ENCODE measurements at regions of chr1 and their contacts with region 1.

Region 1: GRCh38 chr1:199113265-199113869 is 474.5 kb downstream of the PTPRC start:
- DNase-seq: peak; percentile 85
- H3K4me3 ChIP-seq: no peak overlapping the region
- H3K27ac ChIP-seq: peak overlapping the region; percentile 34
- H3K4me1 ChIP-seq: no peaks in the 10 kb centered on the region
- H3K27me3 ChIP-seq: no peaks in the 10 kb centered on the region
- CTCF ChIP-seq: peak; percentile 91

Region 2: DNA sequence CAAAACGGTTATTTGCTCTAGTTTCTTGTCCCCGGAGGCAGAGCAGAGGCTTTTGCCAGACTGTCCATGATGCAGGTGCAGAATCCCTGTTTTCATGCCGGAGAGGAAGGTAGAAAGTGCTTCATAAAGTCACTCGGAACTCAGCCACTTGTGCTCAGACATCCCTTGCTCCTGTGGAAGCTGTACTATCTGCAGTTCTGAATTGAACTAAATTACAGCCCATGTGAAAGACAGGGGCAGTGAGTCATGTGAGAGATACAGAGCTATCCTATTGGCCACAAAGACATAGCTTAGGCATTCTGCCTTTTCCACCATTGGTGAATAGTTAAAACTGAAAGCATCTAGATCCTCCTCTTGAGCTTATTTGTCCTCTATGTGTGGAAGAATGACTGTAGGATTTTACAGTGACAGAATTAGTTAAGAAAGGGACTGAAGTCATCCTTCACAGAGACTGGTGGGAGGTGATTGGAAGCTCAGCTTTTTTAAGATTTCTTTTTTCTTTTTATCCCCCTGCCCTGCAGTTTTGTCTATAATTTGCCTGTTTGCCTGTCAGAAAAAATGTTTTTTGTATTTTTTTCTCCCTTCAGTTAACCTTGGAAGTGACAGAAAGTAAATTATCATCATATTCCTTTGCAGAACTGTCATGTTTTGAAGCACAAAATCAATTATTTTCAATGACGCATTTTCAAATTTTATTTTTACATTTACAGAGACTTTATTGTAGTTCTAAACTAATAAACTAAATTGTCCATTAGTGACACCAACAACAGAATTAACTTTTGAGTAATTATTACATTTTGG is 175.9 kb before region 1 on chr1:
- CTCF ChIA-PET with region 1: interaction called, 3 read pairs
- POLR2A ChIA-PET with region 1: no interaction called
- intact Hi-C with region 1: loop called (anchors 5 kb)
- DNase-seq: peak; percentile 98
- H3K4me3 ChIP-seq: peak overlapping the region; percentile 68
- H3K27ac ChIP-seq: peak overlapping the region; percentile 94
- H3K4me1 ChIP-seq: peaks cover 10% of the 10 kb centered on the region
- H3K27me3 ChIP-seq: no peaks in the 10 kb centered on the region
- CTCF ChIP-seq: no peak

Region 3: DNA sequence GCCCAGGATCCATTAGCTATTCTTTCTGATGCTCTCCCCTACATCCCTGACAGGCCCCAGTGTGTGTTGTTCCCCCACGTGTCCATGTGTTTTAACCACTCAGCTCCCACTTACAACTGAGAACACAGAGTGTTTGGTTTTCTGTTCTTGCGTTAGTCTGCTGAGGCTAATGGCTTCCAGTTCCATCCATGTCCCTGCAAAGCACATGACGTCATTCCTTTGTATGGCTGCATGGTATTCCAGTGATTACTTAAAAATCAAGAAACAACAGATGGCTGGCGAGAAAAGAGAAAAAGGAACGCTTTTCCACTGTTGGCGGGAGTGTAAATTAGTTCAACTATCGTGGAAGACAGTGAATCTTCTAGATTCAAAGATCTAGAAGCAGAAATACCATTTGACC is 81.5 kb after region 1 on chr1:
- CTCF ChIA-PET with region 1: no interaction called
- POLR2A ChIA-PET with region 1: no interaction called
- intact Hi-C with region 1: no loop called
- DNase-seq: no peak
- H3K4me3 ChIP-seq: no peak overlapping the region
- H3K27ac ChIP-seq: no peak overlapping the region
- H3K4me1 ChIP-seq: no peaks in the 10 kb centered on the region
- H3K27me3 ChIP-seq: no peaks in the 10 kb centered on the region
- CTCF ChIP-seq: no peak

Region 4: GRCh38 chr1:199218065-199218464 is 104.7 kb after region 1 on chr1:
- CTCF ChIA-PET with region 1: no interaction called
- POLR2A ChIA-PET with region 1: no interaction called
- intact Hi-C with region 1: no loop called
- DNase-seq: peak; percentile 40
- H3K4me3 ChIP-seq: no peak overlapping the region
- H3K27ac ChIP-seq: no peak overlapping the region
- H3K4me1 ChIP-seq: peaks cover 8% of the 10 kb centered on the region
- H3K27me3 ChIP-seq: no peaks in the 10 kb centered on the region
- CTCF ChIP-seq: no peak

Measured in A673 (cell line).